AG04450 (cell line): ENCODE measurements at regions of chr3 and their contacts with region 1.

Region 1: DNA sequence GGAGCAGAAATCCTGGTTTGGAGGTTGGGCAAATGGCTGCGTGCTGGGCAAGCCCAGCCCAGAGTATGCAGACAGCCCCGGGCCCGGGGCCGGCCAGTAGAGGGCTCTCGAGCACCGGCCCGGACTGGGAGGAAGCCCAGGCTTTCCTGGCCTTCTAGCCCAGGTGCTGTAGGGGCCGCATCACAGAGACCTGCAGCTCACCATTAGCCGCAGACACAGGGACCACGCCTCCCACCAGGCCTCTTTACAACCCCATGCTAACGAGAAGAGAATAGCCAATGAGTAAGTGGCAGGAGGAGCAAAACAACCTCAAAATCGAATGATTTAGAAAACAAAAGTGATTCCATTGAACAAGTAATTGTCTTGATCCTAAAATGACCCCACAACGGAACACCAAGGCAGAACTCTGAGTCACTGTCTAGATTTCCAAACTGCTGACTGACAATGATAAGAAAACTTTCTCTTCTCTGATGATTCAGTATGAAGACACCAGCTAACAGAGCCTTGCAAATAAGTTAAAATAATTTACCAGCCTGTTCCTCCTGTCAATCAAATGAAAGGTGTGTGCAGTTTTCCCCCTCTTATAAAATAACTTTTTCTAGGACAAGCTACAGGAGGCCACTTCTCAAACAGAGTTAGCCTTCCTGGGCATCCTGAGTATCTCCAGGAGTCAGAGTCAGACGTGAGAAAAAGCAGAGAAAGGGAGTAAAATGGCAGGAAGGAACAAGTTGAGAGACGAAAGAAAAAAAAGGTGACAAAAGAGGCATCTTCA is 102.2 kb downstream of the DGKG start:
- DNase-seq: no peak
- H3K4me3 ChIP-seq: no peak overlapping the region; the same call in none of the 2 replicates
- H3K27ac ChIP-seq: no peak overlapping the region
- H3K27me3 ChIP-seq: peaks cover 11% of the 10 kb centered on the region
- CTCF ChIP-seq: peak; percentile 96

Region 2: DNA sequence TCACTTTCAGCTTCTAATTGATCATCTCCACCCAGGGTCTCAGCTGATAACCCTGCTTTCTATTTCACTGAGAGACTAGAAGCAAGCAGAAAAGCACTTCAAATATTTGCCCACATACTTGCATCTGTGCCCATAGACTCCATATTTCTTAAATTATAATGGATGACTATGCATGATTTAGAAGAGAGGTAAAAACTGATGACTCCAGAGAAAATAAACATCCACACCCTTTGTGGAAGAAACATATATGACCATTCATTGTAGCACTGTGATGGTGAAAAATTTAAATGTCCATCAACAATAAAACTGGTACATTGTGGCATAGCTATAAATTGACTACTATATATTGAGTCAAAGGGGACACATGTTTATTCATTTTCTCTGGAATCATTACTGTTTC is 427.8 kb before region 1 on chr3:
- CTCF ChIA-PET with region 1: interaction called, 11 read pairs
- POLR2A ChIA-PET with region 1: no interaction called
- DNase-seq: no peak
- H3K4me3 ChIP-seq: no peak overlapping the region
- H3K27ac ChIP-seq: no peak overlapping the region
- H3K27me3 ChIP-seq: no peaks in the 10 kb centered on the region
- CTCF ChIP-seq: no peak

Region 3: GRCh38 chr3:185983495-185984141 is 276.2 kb before region 1 on chr3:
- CTCF ChIA-PET with region 1: interaction called, 28 read pairs
- POLR2A ChIA-PET with region 1: no interaction called
- DNase-seq: peak; percentile 45
- H3K4me3 ChIP-seq: no peak overlapping the region
- H3K27ac ChIP-seq: no peak overlapping the region
- H3K27me3 ChIP-seq: no peaks in the 10 kb centered on the region
- CTCF ChIP-seq: peak; percentile 92

Region 4: DNA sequence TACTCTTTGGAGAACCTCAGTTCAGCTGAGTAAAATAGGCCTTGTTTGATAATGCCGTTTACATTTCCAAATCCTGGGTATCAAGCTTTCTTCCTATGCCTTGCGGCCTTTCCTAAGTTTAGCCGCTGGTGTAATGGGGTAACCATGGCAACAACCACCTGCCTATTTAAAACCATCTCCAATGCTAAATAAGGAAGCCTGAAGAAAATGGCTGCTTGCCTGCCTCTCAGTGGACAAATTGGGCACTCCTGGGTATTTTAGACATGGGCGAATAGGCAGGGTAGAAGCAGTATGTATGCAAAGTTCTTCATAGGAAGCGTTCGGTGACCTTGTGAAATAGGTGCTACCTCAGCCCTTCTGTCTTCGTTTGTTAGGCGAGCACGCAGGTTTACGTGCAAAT is 20.5 kb before region 1 on chr3:
- CTCF ChIA-PET with region 1: interaction called, 10 read pairs
- POLR2A ChIA-PET with region 1: no interaction called
- DNase-seq: no peak
- H3K4me3 ChIP-seq: no peak overlapping the region
- H3K27ac ChIP-seq: no peak overlapping the region
- H3K27me3 ChIP-seq: peaks cover 7% of the 10 kb centered on the region
- CTCF ChIP-seq: no peak

Region 5: DNA sequence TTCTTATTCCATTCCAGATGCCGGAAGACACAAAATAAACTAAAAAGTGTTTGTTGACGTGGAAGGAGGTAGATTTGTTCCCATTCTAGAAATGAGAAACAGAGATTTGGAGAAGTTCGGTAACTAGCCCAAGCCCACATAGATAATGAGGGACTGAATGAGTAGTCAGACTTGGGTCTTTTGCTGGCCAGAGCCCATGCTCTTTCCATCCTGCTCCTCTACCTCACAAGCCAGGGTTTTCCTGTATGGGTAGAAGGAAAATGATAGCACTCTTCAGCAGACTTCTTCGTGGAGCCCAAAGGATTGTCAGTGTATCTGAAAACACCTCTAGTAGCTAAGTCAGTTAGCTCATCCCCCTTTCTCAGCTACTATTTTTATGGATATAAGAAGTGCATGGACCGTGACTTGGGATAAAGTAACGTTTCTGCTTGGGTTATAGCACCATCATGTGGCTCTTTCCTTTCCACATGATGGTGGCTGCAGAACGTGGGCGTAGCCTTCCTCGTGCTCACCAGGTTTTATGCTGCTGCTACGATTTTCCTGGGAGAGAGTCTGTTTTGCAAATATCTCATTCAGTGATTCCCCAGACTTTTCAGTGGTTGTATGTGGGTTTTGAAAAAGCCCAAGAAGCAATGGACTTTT is 17.6 kb after region 1 on chr3:
- CTCF ChIA-PET with region 1: interaction called, 28 read pairs
- POLR2A ChIA-PET with region 1: no interaction called
- DNase-seq: peak; percentile 37
- H3K4me3 ChIP-seq: no peak overlapping the region
- H3K27ac ChIP-seq: no peak overlapping the region
- H3K27me3 ChIP-seq: peaks cover 2% of the 10 kb centered on the region
- CTCF ChIP-seq: peak; percentile 64

Region 6: GRCh38 chr3:186534113-186534669 is 274.4 kb after region 1 on chr3:
- CTCF ChIA-PET with region 1: interaction called, 143 read pairs
- POLR2A ChIA-PET with region 1: no interaction called
- DNase-seq: no peak
- H3K4me3 ChIP-seq: no peak overlapping the region
- H3K27ac ChIP-seq: no peak overlapping the region
- H3K27me3 ChIP-seq: no peaks in the 10 kb centered on the region
- CTCF ChIP-seq: no peak